Heart right ventricle (tissue), 16 donors: ENCODE measurements at regions of chr7 and their contacts with region 1.

Region 1: DNA sequence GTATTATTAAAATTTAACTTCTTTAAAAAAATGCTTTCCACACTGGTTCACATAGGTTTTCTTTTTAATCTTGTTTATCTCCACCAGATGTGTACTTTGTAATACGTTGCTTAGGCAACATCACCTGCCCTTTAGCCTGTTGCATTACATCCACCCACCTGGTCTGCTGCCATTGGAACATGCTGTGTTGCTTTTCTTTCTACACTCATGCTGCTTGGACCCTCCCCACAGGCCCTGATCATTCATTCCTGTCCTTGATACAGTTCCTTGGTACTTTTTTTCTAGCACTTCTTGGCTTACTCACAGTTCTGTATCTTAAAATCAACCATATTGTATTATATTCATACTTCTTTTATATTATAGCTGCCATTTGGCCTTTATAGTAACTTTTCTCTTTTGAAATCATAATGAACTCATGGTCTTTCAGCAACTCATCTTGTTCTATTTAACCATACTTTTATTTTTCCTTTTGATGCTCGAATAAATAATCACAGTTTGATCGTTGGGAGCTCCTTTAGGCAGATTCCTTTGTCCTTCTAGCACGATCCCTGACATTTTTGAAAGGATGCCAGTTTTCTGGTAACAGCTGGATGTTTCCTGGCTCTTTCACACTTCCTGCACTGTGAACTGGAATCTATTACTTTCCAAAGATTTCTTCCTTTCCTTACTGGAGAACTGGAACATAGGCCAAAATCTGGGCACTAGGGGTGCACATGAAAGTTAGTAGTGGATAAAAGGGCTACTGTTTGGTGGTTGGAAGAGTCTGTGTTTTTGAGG is 125.1 kb downstream of the CDK14 start:
- DNase-seq: peak in 1 of 2 donors; percentile 16
- ATAC-seq: peak in 7 of 8 donors; percentile 43 to 74 (median 65)
- H3K4me3 ChIP-seq: no peak overlapping the region
- H3K27ac ChIP-seq: peak overlapping the region in 3 of 10 donors; percentile 10 to 51 (median 23)
- H3K4me1 ChIP-seq: peaks cover 0 to 48% (median 18%) of the 10 kb centered on the region in 9 donors
- H3K27me3 ChIP-seq: no peaks in the 10 kb centered on the region
- CTCF ChIP-seq: no peak

Region 2: DNA sequence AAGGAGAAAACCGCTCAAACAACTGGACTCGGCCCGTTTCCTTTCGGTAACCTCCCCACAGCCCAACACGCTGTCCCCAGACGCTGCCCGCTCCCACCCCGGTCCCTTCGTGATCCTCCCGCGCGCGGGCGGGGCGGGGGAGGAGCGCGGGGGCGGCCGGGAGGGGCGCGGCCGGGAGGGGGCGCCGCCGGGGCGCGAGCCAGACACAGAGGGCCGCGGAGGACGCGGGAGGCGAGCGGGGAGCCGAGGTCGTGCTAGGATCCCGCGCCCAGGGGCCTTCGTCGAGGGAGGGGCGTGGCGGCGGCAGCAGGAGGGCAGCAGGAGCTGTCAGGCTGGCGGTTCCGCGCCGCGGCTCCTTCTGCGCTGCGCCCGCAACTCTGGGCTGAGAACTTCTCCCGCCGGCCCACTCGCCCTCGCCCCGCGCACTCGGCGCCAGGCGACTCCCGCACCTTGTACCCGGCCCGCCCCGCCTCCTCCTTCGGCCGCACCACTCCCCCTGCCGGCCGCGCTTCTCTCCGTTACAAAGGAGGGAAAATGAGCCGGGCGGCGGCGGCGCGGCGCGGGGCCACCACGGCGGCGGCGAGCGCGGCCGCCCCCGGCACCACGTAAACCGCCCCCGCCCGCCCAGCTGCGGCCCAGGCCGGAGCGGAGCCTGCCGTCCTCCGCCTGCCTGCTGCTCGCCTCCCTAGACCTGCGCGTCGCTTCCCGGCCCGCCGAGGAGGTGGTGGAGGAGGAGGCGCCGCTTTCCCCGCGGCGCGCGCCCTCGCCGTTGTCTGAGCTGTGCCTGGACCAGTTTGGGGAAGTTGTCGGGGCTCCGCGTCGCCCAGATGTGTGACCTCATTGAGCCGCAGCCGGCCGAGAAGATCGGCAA is 125.1 kb before region 1 on chr7 and contains the start of gene CDK14:
- intact Hi-C with region 1: loop called in 1 of 10 experiments (anchors 10 kb)
- DNase-seq: peak; percentile 81 to 85
- ATAC-seq: peak; percentile 62 to 84 (median 74)
- H3K4me3 ChIP-seq: peak within 1 kb of the TSS; percentile 63 to 90 (median 78)
- H3K27ac ChIP-seq: peak within 1 kb of the TSS; percentile 80 to 91 (median 84)
- H3K4me1 ChIP-seq: peaks cover 0 to 58% (median 25%) of the 10 kb centered on the region in 9 donors
- H3K27me3 ChIP-seq: peaks cover 0 to 5% (median 0%) of the 10 kb centered on the region in 7 donors
- CTCF ChIP-seq: peak; percentile 26 to 67 (median 50)
- total RNA-seq, gene CDK14: 12.7 to 36.5 (median 25.5) TPM

Region 3: GRCh38 chr7:90824386-90825307 is 103.5 kb after region 1 on chr7:
- intact Hi-C with region 1: loop called in 1 of 10 experiments (anchors 10 kb)
- DNase-seq: no peak
- ATAC-seq: no peak
- H3K4me3 ChIP-seq: no peak overlapping the region
- H3K27ac ChIP-seq: peak overlapping the region in 1 of 10 donors; percentile 69
- H3K4me1 ChIP-seq: peaks cover 0 to 23% (median 4%) of the 10 kb centered on the region in 9 donors
- H3K27me3 ChIP-seq: no peaks in the 10 kb centered on the region
- CTCF ChIP-seq: no peak